ENCODE measurements at regions of chr15 and their contacts with region 1.

Region 1: DNA sequence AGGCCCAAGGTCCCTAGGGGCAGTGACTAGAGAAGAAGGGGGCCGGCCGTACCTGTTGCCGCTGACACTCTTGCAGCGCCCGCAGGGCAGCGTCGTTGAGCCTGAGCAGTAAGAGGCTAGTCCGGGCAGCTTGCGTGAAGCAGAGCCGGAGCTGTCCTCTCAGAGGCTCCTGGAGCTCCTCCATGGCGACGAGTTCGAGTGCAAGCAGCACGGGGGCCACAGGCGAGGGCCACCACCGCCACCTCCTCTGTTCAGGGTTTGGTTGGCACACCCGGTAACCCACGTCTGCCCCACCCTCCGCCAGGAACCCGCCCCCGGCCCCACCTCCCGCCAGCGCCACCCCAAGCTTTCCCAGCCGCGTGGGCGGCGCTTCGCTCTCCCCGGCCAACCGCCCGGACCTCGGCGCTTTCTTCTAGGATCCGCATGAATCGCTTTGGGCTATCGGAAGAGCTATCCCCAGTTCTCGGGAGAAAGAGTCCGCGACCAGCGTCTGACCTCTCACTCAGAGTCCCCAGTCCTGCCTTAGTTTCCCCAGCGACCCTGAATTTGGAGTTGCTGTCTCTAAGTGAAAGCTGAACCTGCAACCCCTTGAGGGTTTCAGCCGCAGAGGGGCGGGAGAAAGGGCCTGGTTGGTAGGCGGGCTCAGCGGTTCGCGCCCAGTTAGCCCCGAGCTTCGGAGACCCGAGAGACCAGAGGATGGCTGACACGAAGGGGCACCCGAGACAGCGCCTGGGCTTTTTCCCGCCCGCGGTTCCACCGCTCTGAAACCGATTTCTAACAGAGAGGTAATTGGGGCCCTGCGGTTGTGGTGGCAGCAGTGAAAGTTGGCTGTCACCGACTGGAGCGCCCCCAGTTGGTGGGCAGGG is at the start of gene ELL3:
- DNase-seq: peak; percentile 77
- ATAC-seq: peak; percentile 77
- H3K4me3 ChIP-seq: peak within 1 kb of the TSS; percentile 90 to 98
- H3K27ac ChIP-seq: peak within 1 kb of the TSS; percentile 69
- H3K4me1 ChIP-seq: peaks cover 9 to 31% of the 10 kb centered on the region in 2 experiments
- H3K27me3 ChIP-seq: no peaks in the 10 kb centered on the region
- CTCF ChIP-seq: peak; percentile 59 to 89 (median 60); a peak in 5 of 6 replicates
- POLR2A ChIP-seq: peak; percentile 16
- RAD21 ChIP-seq: no peak; the same call in none of the 2 replicates
- total RNA-seq, gene ELL3: 16.2 TPM

Region 2: DNA sequence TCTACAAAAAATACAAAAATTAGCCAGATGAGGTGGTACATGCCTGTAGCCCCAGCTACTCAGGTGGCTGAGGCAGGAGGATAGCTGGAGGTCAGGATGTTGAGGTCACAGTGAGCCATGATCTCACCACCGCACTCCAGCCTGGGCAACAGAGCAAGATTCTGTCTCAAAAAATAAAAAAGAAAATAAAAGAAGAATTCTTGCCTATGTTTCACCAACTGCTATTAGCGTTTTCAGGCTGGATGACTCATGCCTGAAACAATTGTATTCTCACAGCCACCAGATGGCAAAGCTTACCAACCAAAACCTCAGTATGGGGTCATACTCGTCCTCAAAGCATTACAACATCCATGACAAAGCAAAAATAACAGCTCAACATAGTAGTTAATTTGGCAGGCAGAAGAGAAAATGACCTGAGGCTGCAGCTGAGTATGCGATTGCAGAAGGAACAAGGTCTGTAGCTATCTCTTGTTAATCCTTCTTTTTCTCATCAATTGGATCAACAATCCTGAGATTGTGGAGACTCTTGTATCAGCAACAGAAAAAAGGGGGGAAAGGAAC is 336.1 kb before region 1 on chr15:
- CTCF ChIA-PET with region 1: no interaction called
- POLR2A ChIA-PET with region 1: no interaction called
- RAD21 ChIA-PET with region 1: no interaction called
- intact Hi-C with region 1: loop called (anchors 10 kb)
- DNase-seq: peak; percentile 62
- ATAC-seq: peak; percentile 92
- H3K4me3 ChIP-seq: no peak overlapping the region
- H3K27ac ChIP-seq: peak overlapping the region; percentile 67; the same call in 1 of the 2 replicates
- H3K4me1 ChIP-seq: peaks cover 6 to 10% of the 10 kb centered on the region in 2 experiments; a peak in 3 of 4 replicates
- H3K27me3 ChIP-seq: no peaks in the 10 kb centered on the region
- CTCF ChIP-seq: peak in 2 of 3 experiments; percentile 39 to 49; a peak in 3 of 6 replicates
- POLR2A ChIP-seq: no peak
- RAD21 ChIP-seq: peak; percentile 69

Region 3: DNA sequence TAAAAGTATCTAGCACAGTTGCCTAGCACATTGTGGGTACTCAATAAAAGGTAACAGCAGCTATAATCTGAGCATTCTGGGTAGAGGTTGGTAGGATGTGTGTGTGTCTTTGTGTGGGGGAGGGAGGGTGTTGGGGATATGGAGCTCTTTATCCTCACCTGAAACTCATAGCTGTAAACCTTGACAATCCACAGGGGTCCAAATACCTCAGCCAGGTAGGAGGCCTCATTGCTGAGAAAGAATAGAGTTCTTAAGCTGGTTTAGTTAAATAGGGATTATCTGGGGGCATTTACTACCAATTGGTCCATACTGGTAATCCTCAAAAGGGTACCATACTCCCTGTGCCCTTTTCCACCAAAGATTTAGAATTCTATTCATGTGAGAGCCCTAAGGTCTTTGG is 19.0 kb after region 1 on chr15:
- CTCF ChIA-PET with region 1: interaction called, 12 read pairs
- POLR2A ChIA-PET with region 1: interaction called, 8 read pairs
- RAD21 ChIA-PET with region 1: no interaction called
- intact Hi-C with region 1: no loop called
- DNase-seq: no peak
- ATAC-seq: no peak
- H3K4me3 ChIP-seq: no peak overlapping the region
- H3K27ac ChIP-seq: no peak overlapping the region
- H3K4me1 ChIP-seq: peaks cover 16 to 32% of the 10 kb centered on the region in 2 experiments
- H3K27me3 ChIP-seq: no peaks in the 10 kb centered on the region
- CTCF ChIP-seq: no peak
- POLR2A ChIP-seq: no peak
- RAD21 ChIP-seq: no peak

Region 4: GRCh38 chr15:43872416-43873020 is 95.6 kb after region 1 on chr15:
- CTCF ChIA-PET with region 1: no interaction called
- POLR2A ChIA-PET with region 1: no interaction called
- RAD21 ChIA-PET with region 1: no interaction called
- intact Hi-C with region 1: no loop called
- DNase-seq: peak; percentile 45
- ATAC-seq: peak; percentile 93
- H3K4me3 ChIP-seq: no peak overlapping the region
- H3K27ac ChIP-seq: no peak overlapping the region
- H3K4me1 ChIP-seq: no peaks in the 10 kb centered on the region
- H3K27me3 ChIP-seq: no peaks in the 10 kb centered on the region
- CTCF ChIP-seq: peak; percentile 33 to 70 (median 70); a peak in 5 of 6 replicates
- POLR2A ChIP-seq: no peak
- RAD21 ChIP-seq: peak; percentile 67

Region 5: GRCh38 chr15:44157685-44158099 is 380.7 kb after region 1 on chr15:
- CTCF ChIA-PET with region 1: no interaction called
- POLR2A ChIA-PET with region 1: no interaction called
- RAD21 ChIA-PET with region 1: no interaction called
- intact Hi-C with region 1: no loop called
- DNase-seq: peak; percentile 96
- ATAC-seq: peak; percentile 79
- H3K4me3 ChIP-seq: peak overlapping the region in 1 of 2 experiments; percentile 39; a peak in 2 of 4 replicates
- H3K27ac ChIP-seq: peak overlapping the region; percentile 98
- H3K4me1 ChIP-seq: peaks cover 72 to 93% of the 10 kb centered on the region in 2 experiments
- H3K27me3 ChIP-seq: no peaks in the 10 kb centered on the region
- CTCF ChIP-seq: no peak
- POLR2A ChIP-seq: no peak
- RAD21 ChIP-seq: peak; percentile 38; the same call in 1 of the 2 replicates